ENCODE measurements at regions of chr1 and their contacts with region 1.

Region 1: DNA sequence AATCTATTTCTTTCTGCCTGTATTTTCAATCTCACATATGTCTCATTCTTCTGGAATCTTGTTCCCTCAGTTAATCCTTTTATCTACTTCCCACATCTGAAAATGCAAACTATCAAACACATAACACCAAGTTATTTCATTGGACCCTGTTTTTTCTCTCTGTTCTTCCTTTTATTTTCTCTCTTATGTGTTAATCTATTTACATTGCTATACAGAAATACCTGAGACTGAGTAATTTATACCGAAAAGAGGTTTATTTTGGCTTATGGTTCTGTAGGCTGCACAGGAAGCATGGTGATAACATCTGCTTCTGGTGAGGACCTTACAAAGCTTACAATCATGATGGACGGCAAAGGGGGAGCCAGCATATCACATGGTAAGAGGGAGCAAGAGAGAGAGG is 247.6 kb downstream of the TGFB2 start:
- DNase-seq: peak; percentile 94
- H3K4me3 ChIP-seq: peak overlapping the region in 1 of 3 experiments; percentile 7
- H3K27ac ChIP-seq: peak overlapping the region; percentile 68
- H3K4me1 ChIP-seq: peaks cover 19% of the 10 kb centered on the region
- H3K27me3 ChIP-seq: no peaks in the 10 kb centered on the region
- CTCF ChIP-seq: no peak
- POLR2A ChIP-seq: peak; percentile 42

Region 2: GRCh38 chr1:218384581-218384993 is 208.1 kb before region 1 on chr1:
- CTCF ChIA-PET with region 1: no interaction called
- POLR2A ChIA-PET with region 1: no interaction called
- dilution Hi-C with region 1: no loop called
- intact Hi-C with region 1: loop called (anchors 2 kb)
- DNase-seq: peak; percentile 68
- H3K4me3 ChIP-seq: no peak overlapping the region
- H3K27ac ChIP-seq: peak overlapping the region; percentile 38
- H3K4me1 ChIP-seq: peaks cover 22% of the 10 kb centered on the region
- H3K27me3 ChIP-seq: no peaks in the 10 kb centered on the region
- CTCF ChIP-seq: no peak
- POLR2A ChIP-seq: no peak

Region 3: DNA sequence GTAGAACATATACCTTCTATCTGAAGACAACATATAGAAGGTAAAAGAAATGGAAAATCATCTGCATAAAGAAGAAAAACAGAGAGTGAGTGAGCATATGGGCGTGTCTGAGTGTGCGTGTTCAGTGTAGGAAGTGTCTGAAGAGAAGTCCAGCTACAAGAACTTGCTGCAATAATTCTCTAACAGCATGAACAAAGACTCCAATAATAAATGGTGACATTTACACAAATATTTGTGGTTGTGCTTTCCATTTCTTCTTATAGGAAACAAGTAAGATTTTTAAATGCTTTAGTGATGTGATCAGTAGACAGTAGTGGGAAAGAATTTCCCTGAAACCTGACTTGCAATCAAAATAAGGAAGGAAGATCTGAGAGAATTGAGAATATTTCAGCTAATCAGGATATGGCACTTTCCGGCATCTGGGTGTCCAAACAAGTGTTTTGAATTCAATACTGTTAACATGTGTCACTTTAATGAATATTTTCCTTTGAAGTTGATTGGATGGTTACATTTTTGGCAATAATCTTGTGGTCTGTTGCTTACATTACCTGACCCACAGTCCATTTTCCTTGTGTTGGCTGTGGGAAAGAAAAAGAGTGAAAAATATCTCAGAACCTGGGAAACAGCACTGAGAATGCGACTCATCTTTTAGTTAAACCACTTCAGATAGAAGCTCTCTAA is 93.5 kb before region 1 on chr1:
- CTCF ChIA-PET with region 1: no interaction called
- POLR2A ChIA-PET with region 1: no interaction called
- dilution Hi-C with region 1: no loop called
- intact Hi-C with region 1: loop called (anchors 1 kb)
- DNase-seq: peak; percentile 83
- H3K4me3 ChIP-seq: peak overlapping the region in 1 of 3 experiments; percentile 60
- H3K27ac ChIP-seq: peak overlapping the region; percentile 93
- H3K4me1 ChIP-seq: peaks cover 29% of the 10 kb centered on the region
- H3K27me3 ChIP-seq: no peaks in the 10 kb centered on the region
- CTCF ChIP-seq: no peak
- POLR2A ChIP-seq: no peak

Region 4: DNA sequence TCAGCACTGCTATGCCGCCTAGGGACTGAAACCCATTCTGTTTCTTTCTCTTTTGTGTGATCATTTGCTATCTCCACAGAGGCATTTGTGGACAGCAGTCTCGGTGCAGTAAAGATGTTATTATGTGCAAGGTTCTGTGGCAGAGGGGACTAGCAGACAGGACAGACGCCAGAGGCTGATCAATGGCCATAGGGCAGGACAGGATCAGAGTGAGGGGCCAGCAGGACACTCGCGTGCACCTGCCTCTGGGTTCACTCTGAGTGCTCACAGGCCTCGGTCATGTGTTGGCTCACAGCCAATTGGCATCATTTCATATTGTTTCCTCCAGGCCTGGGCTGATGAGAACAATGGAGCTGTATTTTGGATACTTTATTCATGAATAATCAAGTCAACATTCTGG is 35.0 kb before region 1 on chr1:
- CTCF ChIA-PET with region 1: no interaction called
- POLR2A ChIA-PET with region 1: no interaction called
- dilution Hi-C with region 1: no loop called
- intact Hi-C with region 1: loop called (anchors 1 kb)
- DNase-seq: peak; percentile 96
- H3K4me3 ChIP-seq: no peak overlapping the region
- H3K27ac ChIP-seq: peak overlapping the region; percentile 65
- H3K4me1 ChIP-seq: peaks cover 13% of the 10 kb centered on the region
- H3K27me3 ChIP-seq: no peaks in the 10 kb centered on the region
- CTCF ChIP-seq: no peak
- POLR2A ChIP-seq: no peak

Region 5: DNA sequence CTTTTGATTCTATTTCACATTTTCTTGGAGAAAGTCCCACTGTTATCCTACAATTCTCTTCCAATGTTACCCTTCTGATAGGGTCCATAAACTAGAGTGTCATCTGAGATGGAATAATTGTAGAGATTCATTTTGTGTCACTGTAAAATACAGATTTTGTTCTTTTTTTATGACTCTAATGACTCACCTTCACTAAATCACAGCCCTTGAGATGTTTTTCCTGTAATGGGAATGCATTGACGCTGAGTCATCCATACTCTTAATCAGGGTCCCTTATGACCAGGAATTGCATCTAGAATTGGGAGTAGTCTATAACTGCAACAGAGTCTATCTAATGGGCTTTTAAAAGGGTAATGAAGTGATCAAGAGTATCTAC is 68.0 kb after region 1 on chr1:
- CTCF ChIA-PET with region 1: no interaction called
- POLR2A ChIA-PET with region 1: no interaction called
- dilution Hi-C with region 1: no loop called
- intact Hi-C with region 1: loop called (anchors 2 kb)
- DNase-seq: peak; percentile 91
- H3K4me3 ChIP-seq: no peak overlapping the region
- H3K27ac ChIP-seq: peak overlapping the region; percentile 64
- H3K4me1 ChIP-seq: peaks cover 26% of the 10 kb centered on the region
- H3K27me3 ChIP-seq: no peaks in the 10 kb centered on the region
- CTCF ChIP-seq: no peak
- POLR2A ChIP-seq: no peak

Region 6: DNA sequence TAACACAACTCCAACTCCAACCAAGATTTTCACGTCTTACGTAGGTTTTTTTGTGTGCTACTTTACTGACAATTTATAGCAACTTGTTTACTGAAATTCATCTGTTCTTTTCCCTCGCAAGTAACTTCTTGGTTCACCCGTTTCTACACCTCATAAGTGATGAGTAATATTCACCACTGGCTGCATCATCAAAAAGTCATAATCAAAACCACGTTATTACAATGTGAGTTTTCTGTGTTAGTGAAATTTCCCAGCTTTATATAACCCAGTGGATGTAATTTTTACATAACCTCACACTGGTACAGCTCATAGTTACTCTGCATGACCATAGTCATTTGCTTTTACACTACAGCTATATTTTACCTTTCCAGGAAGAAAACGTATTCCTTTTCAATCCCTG is 179.9 kb after region 1 on chr1:
- CTCF ChIA-PET with region 1: no interaction called
- POLR2A ChIA-PET with region 1: no interaction called
- dilution Hi-C with region 1: no loop called
- intact Hi-C with region 1: no loop called
- DNase-seq: no peak
- H3K4me3 ChIP-seq: no peak overlapping the region
- H3K27ac ChIP-seq: no peak overlapping the region
- H3K4me1 ChIP-seq: no peaks in the 10 kb centered on the region
- H3K27me3 ChIP-seq: no peaks in the 10 kb centered on the region
- CTCF ChIP-seq: no peak
- POLR2A ChIP-seq: no peak

Region 7: DNA sequence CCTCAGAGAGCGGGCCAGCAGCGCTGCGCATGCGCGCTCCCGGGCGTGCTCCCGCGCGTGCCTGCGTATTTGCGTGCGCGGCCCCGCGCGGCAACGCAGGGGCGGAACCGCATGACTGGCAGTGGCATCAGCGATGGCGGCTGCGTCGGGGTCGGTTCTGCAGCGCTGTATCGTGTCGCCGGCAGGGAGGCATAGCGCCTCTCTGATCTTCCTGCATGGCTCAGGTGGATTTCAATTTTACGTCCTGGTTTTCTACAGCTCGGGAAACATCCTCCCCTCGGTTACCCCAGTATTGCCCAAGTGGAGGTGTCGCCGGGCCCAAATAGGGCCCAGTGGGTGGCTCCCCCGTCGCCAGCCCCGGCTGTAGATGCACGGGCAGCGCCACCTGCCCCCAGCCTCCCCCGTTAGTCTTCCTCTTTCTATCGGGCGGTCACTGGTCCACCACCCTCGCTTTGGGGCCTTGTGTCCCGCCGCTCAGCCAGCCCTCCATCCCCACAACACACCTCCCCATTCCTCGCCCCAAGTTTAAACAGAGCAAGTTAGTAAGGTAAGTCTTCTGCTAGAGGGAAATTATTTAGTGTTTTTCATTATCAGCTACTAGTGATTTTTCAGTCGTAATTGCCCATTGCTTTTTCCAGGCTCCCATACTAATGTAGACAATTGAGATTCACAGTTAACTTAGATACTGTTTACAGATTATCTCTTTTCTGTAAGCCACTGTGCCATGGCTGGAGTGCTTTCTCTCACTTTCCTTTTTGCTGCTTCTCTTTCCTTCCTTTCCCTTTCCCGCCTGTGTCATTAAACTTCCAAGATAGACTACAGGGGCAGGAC is 581.3 kb after region 1 on chr1 and contains the start of gene LYPLAL1:
- CTCF ChIA-PET with region 1: no interaction called
- POLR2A ChIA-PET with region 1: no interaction called
- dilution Hi-C with region 1: no loop called
- intact Hi-C with region 1: loop called (anchors 1 kb)
- DNase-seq: peak; percentile 92
- H3K4me3 ChIP-seq: peak within 1 kb of the TSS; percentile 78 to 90 (median 86)
- H3K27ac ChIP-seq: peak within 1 kb of the TSS; percentile 80
- H3K4me1 ChIP-seq: peaks cover 15% of the 10 kb centered on the region
- H3K27me3 ChIP-seq: no peaks in the 10 kb centered on the region
- CTCF ChIP-seq: peak in 1 of 2 donors; percentile 7
- POLR2A ChIP-seq: peak; percentile 97
- total RNA-seq, gene LYPLAL1: 19.1 and 25.4 TPM in 2 replicates